PC-3 (cell line): ENCODE measurements at regions of chrX and their contacts with region 1.

Region 1: GRCh38 chrX:102768987-102769761 is 48.6 kb downstream of the GPRASP3 start:
- DNase-seq: peak; percentile 96
- ATAC-seq: peak; percentile 77
- H3K4me3 ChIP-seq: peak overlapping the region; percentile 97
- H3K27ac ChIP-seq: peak overlapping the region; percentile 69
- H3K4me1 ChIP-seq: peaks cover 20% of the 10 kb centered on the region
- H3K27me3 ChIP-seq: no peaks in the 10 kb centered on the region
- CTCF ChIP-seq: no peak

Region 2: DNA sequence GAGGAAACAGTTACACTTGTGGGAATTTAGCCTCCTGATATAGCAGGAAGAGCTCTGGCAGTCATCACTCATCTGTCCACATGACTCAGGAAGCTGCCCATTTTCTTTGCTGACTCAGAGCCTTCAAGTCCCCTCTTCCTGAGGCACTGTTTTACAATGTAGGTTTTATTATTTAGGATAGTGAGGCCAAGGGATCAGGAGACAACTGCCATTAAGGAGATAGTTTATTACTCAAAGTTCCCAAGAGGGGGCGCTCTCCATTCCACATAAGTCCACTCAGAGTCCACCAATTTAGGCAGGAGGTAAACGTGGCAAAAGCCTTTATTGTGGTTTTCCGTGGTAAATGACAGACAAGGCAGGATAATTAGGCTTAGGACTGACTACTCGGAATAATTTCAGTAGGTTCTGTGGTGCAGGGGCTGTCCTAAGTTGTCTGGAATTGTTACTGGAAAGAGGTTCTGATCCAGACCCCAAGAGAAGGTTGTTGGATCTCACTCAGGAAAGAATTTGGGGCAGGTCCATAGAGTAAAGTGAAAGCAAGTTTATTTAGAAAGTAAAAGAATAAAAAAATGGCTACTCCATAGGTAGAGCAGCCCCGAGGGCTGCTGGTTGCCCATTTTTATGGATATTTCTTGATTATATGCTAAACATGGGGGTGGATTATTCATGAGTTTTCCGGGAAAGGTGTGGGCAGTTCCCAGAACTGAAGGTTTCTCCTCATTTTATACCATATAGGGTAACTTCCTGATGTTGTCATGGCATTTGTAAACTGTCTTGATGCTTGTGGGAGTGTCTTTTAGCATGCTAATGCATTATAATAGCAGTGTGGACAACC is 71.9 kb after region 1 on chrX:
- CTCF ChIA-PET with region 1: no interaction called
- POLR2A ChIA-PET with region 1: no interaction called
- intact Hi-C with region 1: loop called (anchors 1 kb)
- DNase-seq: peak; percentile 80
- ATAC-seq: peak; percentile 95
- H3K4me3 ChIP-seq: no peak overlapping the region
- H3K27ac ChIP-seq: peak overlapping the region; percentile 76
- H3K4me1 ChIP-seq: peaks cover 20% of the 10 kb centered on the region
- H3K27me3 ChIP-seq: no peaks in the 10 kb centered on the region
- CTCF ChIP-seq: peak; percentile 83